Activated CD4-positive, alpha-beta memory T cell treated with anti-CD3 and anti-CD28 coated beads for 36 hours (primary cell): ENCODE measurements at regions of chr12 and their contacts with region 1.

Region 1: GRCh38 chr12:124767066-124767821 is 96.4 kb downstream of the SCARB1 start:
- DNase-seq: peak; percentile 88
- H3K4me3 Mint-ChIP-seq: no peak overlapping the region
- H3K27ac Mint-ChIP-seq: no peak overlapping the region
- H3K4me1 Mint-ChIP-seq: peaks cover 18% of the 10 kb centered on the region
- H3K27me3 Mint-ChIP-seq: peaks cover 15% of the 10 kb centered on the region

Region 2: GRCh38 chr12:123905319-123905925 is 861.8 kb before region 1 on chr12:
- CTCF ChIA-PET with region 1: no interaction called
- POLR2A ChIA-PET with region 1: no interaction called
- intact Hi-C with region 1: loop called (anchors 10 kb)
- DNase-seq: peak; percentile 79
- H3K4me3 Mint-ChIP-seq: no peak overlapping the region
- H3K27ac Mint-ChIP-seq: peak overlapping the region; percentile 15
- H3K4me1 Mint-ChIP-seq: peaks cover 10% of the 10 kb centered on the region
- H3K27me3 Mint-ChIP-seq: peaks cover 7% of the 10 kb centered on the region

Region 3: GRCh38 chr12:124162151-124162989 is 604.9 kb before region 1 on chr12:
- CTCF ChIA-PET with region 1: no interaction called
- POLR2A ChIA-PET with region 1: no interaction called
- intact Hi-C with region 1: loop called (anchors 10 kb)
- DNase-seq: peak; percentile 12
- H3K4me3 Mint-ChIP-seq: no peak overlapping the region
- H3K27ac Mint-ChIP-seq: no peak overlapping the region
- H3K4me1 Mint-ChIP-seq: no peaks in the 10 kb centered on the region
- H3K27me3 Mint-ChIP-seq: peaks cover 2% of the 10 kb centered on the region

Region 4: DNA sequence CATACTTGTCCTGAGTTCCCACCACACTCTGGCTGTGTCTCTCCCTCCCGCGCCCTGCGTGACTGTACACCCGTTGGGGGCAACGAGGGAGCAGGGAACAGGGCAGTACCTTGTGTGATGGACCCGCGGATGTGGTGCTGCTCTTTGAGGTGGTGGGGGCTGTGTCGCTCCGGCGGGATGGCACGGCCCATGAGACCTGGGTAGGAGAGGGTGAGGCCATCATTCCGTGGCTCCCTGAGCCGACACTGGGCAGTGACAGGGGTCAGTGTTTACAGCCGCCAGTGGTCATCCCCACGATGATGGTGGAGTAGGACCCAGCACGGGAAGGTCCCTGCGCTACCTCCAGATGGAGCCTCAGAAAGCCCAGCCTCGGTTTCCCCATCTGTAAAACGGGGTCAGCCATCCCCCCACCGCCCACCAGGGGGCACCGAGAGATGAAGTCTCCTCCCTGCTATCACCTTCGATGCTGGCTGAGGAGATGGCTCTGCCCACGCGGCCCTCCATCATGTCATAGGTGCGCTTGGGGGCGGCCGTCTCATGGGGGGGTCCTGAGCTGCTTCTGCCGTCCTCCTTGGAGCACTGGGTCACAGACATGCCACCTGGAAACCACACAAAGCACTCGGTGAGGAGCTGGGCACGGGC is 419.4 kb before region 1 on chr12:
- CTCF ChIA-PET with region 1: interaction called, 18 read pairs
- POLR2A ChIA-PET with region 1: no interaction called
- intact Hi-C with region 1: no loop called
- DNase-seq: peak; percentile 39
- H3K4me3 Mint-ChIP-seq: no peak overlapping the region
- H3K27ac Mint-ChIP-seq: no peak overlapping the region
- H3K4me1 Mint-ChIP-seq: no peaks in the 10 kb centered on the region
- H3K27me3 Mint-ChIP-seq: no peaks in the 10 kb centered on the region

Region 5: GRCh38 chr12:124545508-124546418 is 221.5 kb before region 1 on chr12:
- CTCF ChIA-PET with region 1: interaction called, 5 read pairs
- POLR2A ChIA-PET with region 1: no interaction called
- intact Hi-C with region 1: loop called (anchors 5 kb)
- DNase-seq: peak; percentile 85
- H3K4me3 Mint-ChIP-seq: no peak overlapping the region
- H3K27ac Mint-ChIP-seq: peak overlapping the region; percentile 70
- H3K4me1 Mint-ChIP-seq: peaks cover 72% of the 10 kb centered on the region
- H3K27me3 Mint-ChIP-seq: no peaks in the 10 kb centered on the region

Region 6: GRCh38 chr12:124740691-124741137 is 26.5 kb before region 1 on chr12:
- CTCF ChIA-PET with region 1: interaction called, 16 read pairs
- POLR2A ChIA-PET with region 1: no interaction called
- intact Hi-C with region 1: no loop called
- DNase-seq: peak; percentile 53
- H3K4me3 Mint-ChIP-seq: no peak overlapping the region
- H3K27ac Mint-ChIP-seq: no peak overlapping the region
- H3K4me1 Mint-ChIP-seq: peaks cover 38% of the 10 kb centered on the region
- H3K27me3 Mint-ChIP-seq: peaks cover 6% of the 10 kb centered on the region

Region 7: DNA sequence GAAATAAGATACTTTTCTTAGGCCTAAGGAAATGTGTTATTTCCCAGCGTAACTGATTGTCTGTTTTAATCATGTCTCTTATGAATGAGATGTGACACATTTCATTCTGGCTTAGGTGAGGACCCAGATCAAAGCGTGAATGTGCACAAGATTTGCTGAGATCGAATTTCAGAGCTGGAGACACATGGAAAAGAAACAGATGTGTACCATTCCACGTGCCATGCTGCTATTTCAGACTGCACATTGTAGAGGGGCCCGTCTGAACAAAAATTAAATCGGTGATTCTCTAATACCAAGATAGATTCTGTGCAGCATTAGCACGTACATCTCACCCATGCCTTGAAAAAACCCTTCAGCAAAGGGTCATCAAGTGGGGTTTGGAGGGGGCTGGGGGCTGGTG is 588.4 kb after region 1 on chr12:
- CTCF ChIA-PET with region 1: no interaction called
- POLR2A ChIA-PET with region 1: no interaction called
- intact Hi-C with region 1: no loop called
- DNase-seq: no peak
- H3K4me3 Mint-ChIP-seq: no peak overlapping the region
- H3K27ac Mint-ChIP-seq: no peak overlapping the region
- H3K4me1 Mint-ChIP-seq: no peaks in the 10 kb centered on the region
- H3K27me3 Mint-ChIP-seq: peaks cover 2% of the 10 kb centered on the region